ENCODE measurements at regions of chr9 and their contacts with region 1.

Region 1: DNA sequence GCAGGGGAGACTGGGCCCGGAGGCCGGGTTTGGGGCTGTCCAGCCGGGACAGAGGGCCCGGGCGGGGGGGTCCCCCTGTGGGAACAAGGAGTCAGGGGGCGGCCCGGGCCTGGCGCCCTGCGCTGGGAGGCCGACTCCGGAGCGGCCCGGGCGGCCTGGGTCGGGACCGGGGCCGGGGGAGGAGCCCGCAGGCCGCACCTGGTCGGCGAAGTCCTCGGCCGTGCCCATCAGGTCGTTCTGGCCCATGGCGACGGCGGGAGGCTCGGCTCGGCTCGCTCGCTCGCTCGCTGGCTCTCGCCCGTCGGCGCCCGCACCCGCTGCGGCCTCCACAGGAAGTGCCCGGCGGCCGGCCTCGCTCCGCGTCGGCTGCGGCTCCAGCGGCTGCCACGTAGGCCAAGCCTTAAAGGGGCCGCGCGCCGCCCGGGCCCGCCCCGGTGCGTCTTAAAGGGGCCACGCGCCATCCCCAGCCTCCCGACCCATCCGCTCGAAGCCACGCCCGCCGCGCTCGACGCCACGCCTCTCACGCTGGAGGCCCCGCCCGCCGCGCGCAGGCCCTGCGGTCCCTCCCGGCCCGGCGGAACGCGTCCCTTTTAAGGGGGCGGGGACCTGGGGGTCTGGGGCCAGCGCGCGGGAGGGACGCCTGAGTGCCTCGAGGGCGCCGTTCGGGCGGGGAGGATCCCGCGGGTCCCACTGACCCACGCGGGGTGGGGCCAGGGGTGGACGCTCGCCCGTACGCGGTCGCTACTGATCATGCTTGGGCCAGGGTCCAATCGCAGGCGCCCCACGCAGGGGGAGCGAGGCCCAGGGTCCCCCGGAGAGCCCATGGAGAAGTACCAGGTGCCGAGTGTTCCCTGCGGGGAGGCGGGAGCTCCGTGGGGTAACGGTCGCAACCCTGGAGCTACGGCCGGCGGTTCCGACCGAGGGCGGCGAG is at the starts of genes STKLD1 and SURF4:
- DNase-seq: peak; percentile 100
- H3K4me3 Mint-ChIP-seq: peak within 1 kb of the TSS; percentile 99
- H3K27ac Mint-ChIP-seq: peak within 1 kb of the TSS; percentile 97
- H3K4me1 Mint-ChIP-seq: peaks cover 42% of the 10 kb centered on the region
- H3K27me3 Mint-ChIP-seq: peaks cover 7% of the 10 kb centered on the region
- total RNA-seq, gene STKLD1: 0.16 and 0.33 TPM in 2 replicates
- total RNA-seq, gene SURF4: 235 and 240 TPM in 2 replicates

Region 2: DNA sequence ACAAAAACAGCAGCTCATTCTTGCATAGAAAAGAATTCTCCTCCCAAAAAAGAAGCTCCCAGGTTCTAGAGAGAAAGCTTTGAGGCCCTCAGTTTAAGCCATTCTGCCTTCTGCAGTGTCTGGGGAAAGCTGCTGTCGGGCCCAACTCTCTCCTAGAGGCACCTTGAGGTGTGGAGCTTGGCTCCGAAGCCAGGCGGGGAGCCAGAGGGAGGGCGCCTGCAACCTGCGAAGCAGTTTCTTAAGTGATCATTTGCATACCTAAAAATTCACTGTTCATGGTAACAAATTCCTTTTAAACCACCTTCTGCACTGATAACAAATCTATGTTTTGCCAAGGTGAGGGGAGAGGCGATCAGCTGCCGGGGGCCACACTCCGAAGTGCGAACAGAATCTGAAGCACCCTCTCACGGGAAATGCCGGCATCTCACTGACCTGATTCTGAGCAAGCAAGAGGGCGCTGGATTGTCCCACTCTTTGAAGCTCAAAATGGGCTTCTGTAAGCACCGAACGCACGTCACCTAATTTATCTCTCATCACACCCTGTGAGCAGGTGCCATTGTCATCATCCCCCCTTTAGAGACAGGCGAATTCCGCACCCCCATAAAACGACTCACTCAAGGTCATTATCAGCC is 619.7 kb before region 1 on chr9:
- intact Hi-C with region 1: no loop called
- DNase-seq: no peak
- H3K4me3 Mint-ChIP-seq: no peak overlapping the region
- H3K27ac Mint-ChIP-seq: no peak overlapping the region
- H3K4me1 Mint-ChIP-seq: no peaks in the 10 kb centered on the region
- H3K27me3 Mint-ChIP-seq: peaks cover 26% of the 10 kb centered on the region

Region 3: GRCh38 chr9:133184962-133185361 is 191.0 kb before region 1 on chr9:
- intact Hi-C with region 1: loop called (anchors 5 kb)
- DNase-seq: peak; percentile 86
- H3K4me3 Mint-ChIP-seq: peak overlapping the region; percentile 16
- H3K27ac Mint-ChIP-seq: peak overlapping the region; percentile 75
- H3K4me1 Mint-ChIP-seq: peaks cover 20% of the 10 kb centered on the region
- H3K27me3 Mint-ChIP-seq: peaks cover 53% of the 10 kb centered on the region

Region 4: GRCh38 chr9:133347985-133348717 is 27.8 kb before region 1 on chr9 and contains the starts of genes MED22 and RPL7A:
- intact Hi-C with region 1: loop called (anchors 1 kb)
- DNase-seq: peak; percentile 97
- H3K4me3 Mint-ChIP-seq: peak within 1 kb of the TSS; percentile 100
- H3K27ac Mint-ChIP-seq: peak within 1 kb of the TSS; percentile 95
- H3K4me1 Mint-ChIP-seq: peaks cover 39% of the 10 kb centered on the region
- H3K27me3 Mint-ChIP-seq: peaks cover 2% of the 10 kb centered on the region
- total RNA-seq, gene MED22: 39.5 and 45.0 TPM in 2 replicates
- total RNA-seq, gene RPL7A: 2,650 and 2,658 TPM in 2 replicates

Region 5: GRCh38 chr9:133417541-133418461 is 41.8 kb after region 1 on chr9 and contains the start of gene REXO4:
- intact Hi-C with region 1: loop called (anchors 1 kb)
- DNase-seq: peak; percentile 96
- H3K4me3 Mint-ChIP-seq: peak within 1 kb of the TSS; percentile 88
- H3K27ac Mint-ChIP-seq: peak within 1 kb of the TSS; percentile 94
- H3K4me1 Mint-ChIP-seq: peaks cover 44% of the 10 kb centered on the region
- H3K27me3 Mint-ChIP-seq: no peaks in the 10 kb centered on the region
- total RNA-seq, gene REXO4: 39.9 and 42.3 TPM in 2 replicates